Naive thymus-derived CD4-positive, alpha-beta T cell (primary cell): ENCODE measurements at regions of chr17 and their contacts with region 1.

Region 1: DNA sequence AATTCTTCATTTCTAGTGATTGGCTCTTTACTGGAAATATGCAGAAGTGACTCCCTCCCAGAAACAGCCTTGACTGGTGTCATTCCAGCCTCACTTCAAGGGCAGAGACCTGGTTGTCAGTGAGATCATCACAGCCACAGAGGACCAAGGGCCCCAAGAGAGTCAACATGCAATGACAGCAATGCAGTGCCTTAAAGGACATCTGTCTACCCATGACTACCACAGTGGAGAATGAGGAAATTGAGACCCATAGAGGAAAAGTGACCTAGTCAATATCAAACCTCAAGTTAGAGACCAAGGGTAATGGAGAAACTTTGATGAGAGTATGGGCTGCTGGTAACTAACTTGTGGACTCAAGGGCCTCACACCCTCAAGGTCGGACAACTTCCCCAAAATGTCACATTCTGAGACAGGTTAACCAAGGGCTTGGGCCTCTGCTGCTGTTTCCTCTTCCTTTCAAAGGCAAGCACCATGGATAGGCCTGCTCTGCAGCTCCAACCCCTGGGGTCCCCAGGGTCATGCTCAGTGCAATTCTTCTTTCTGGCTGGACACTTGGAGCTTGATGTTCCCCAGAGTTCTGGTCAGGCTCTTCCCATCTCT is 11.3 kb downstream of the NOG start:
- DNase-seq: no peak
- ATAC-seq: no peak
- H3K4me3 ChIP-seq: no peak overlapping the region
- H3K4me3 Mint-ChIP-seq: peak overlapping the region in 5 of 10 donors; percentile 8 to 85 (median 56)
- H3K27ac ChIP-seq: peak overlapping the region; percentile 88
- H3K27ac Mint-ChIP-seq: peak overlapping the region in 8 of 9 donors; percentile 99 to 100 (median 99)
- H3K4me1 ChIP-seq: peaks cover 0 to 61% of the 10 kb centered on the region in 2 donors
- H3K4me1 Mint-ChIP-seq: peaks cover 17 to 82% (median 66%) of the 10 kb centered on the region in 7 donors
- H3K27me3 ChIP-seq: peaks cover 0 to 3% of the 10 kb centered on the region in 2 donors
- H3K27me3 Mint-ChIP-seq: peaks cover 0 to 11% (median 0%) of the 10 kb centered on the region in 5 donors

Region 2: DNA sequence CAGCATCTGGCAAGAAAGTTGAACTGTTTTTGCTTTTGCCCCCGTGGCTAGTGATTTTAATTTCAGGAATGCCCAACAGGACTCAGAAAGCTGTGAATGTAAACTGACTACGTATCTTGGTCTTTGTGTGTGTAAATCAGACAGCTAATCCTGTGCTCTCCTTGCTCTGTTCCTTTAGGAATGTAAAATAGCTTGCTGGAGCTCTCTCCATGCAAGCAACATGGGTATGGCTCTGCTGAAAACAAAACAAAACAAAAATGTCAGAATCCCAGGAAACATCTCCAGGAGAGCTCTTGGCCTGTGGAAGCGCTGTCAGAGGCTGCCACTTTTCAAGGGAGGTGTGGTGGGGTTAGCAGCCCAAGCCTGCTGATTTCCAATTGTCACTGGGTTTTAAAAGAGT is 173.1 kb before region 1 on chr17:
- CTCF ChIA-PET with region 1: no interaction called
- POLR2A ChIA-PET with region 1: no interaction called
- intact Hi-C with region 1: no loop called
- DNase-seq: no peak
- ATAC-seq: no peak
- H3K4me3 ChIP-seq: no peak overlapping the region
- H3K4me3 Mint-ChIP-seq: no peak overlapping the region
- H3K27ac ChIP-seq: no peak overlapping the region
- H3K27ac Mint-ChIP-seq: no peak overlapping the region
- H3K4me1 ChIP-seq: no peaks in the 10 kb centered on the region
- H3K4me1 Mint-ChIP-seq: no peaks in the 10 kb centered on the region
- H3K27me3 ChIP-seq: no peaks in the 10 kb centered on the region
- H3K27me3 Mint-ChIP-seq: peaks cover 10 to 23% (median 14%) of the 10 kb centered on the region in 5 donors

Region 3: DNA sequence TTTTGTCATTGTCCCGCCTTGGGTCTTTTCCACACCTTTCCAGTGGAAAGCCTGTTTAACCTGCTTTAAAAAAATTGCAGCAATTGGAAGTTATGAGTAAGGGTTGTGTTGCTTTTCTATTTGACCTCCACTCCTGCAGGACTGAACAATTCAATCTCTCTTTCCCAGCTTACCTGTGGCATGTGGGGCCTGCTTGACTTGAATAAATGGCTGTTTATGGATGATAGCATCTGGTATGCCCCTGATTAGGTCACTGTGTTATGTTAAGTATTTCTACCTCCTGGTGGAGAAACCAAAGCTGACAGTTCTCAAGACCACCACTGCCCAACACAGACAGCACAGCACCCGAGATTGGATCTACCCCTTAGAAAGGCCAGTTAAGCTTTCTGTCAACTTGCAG is 76.1 kb before region 1 on chr17:
- CTCF ChIA-PET with region 1: no interaction called
- POLR2A ChIA-PET with region 1: no interaction called
- intact Hi-C with region 1: no loop called
- DNase-seq: no peak
- ATAC-seq: no peak
- H3K4me3 ChIP-seq: no peak overlapping the region
- H3K4me3 Mint-ChIP-seq: no peak overlapping the region
- H3K27ac ChIP-seq: no peak overlapping the region
- H3K27ac Mint-ChIP-seq: no peak overlapping the region
- H3K4me1 ChIP-seq: no peaks in the 10 kb centered on the region
- H3K4me1 Mint-ChIP-seq: no peaks in the 10 kb centered on the region
- H3K27me3 ChIP-seq: no peaks in the 10 kb centered on the region
- H3K27me3 Mint-ChIP-seq: peaks cover 7 to 20% (median 15%) of the 10 kb centered on the region in 5 donors

Region 4: DNA sequence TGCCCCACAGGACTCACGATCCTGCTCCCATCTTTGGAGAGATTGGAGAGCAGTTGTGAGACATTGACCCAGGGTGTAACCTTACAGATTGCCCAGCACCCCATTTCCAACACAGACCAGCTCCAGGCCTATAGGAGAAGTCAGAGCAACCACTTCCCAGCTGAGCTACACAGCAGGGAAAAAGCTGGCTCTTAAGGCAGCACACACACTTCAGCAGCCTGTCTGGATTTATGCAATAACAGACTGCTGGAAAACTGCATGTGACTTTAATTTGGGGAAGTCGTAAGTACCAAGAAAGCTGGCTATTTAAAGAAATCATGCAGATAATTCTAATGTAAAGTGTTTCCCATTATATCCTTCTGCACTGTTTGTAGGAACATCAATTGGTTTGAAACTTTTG is 19.5 kb after region 1 on chr17:
- CTCF ChIA-PET with region 1: interaction called, 26 read pairs
- POLR2A ChIA-PET with region 1: interaction called, 52 read pairs
- intact Hi-C with region 1: no loop called
- DNase-seq: no peak
- ATAC-seq: no peak
- H3K4me3 ChIP-seq: no peak overlapping the region
- H3K4me3 Mint-ChIP-seq: no peak overlapping the region
- H3K27ac ChIP-seq: no peak overlapping the region
- H3K27ac Mint-ChIP-seq: peak overlapping the region in 1 of 9 donors; percentile 41
- H3K4me1 ChIP-seq: no peaks in the 10 kb centered on the region
- H3K4me1 Mint-ChIP-seq: peaks cover 0 to 18% (median 8%) of the 10 kb centered on the region in 7 donors
- H3K27me3 ChIP-seq: no peaks in the 10 kb centered on the region
- H3K27me3 Mint-ChIP-seq: peaks cover 0 to 8% (median 0%) of the 10 kb centered on the region in 5 donors